B cell (primary cell): ENCODE measurements at regions of chr14 and their contacts with region 1.

Region 1: GRCh38 chr14:75002392-75003249 is at the start of gene EIF2B2:
- DNase-seq: peak; percentile 99
- ATAC-seq: peak; percentile 97
- H3K4me3 ChIP-seq: peak within 1 kb of the TSS; percentile 62 to 92 (median 73)
- H3K4me3 Mint-ChIP-seq: peak within 1 kb of the TSS; percentile 98
- H3K27ac ChIP-seq: peak within 1 kb of the TSS; percentile 88 to 95
- H3K27ac Mint-ChIP-seq: peak within 1 kb of the TSS; percentile 88
- H3K4me1 ChIP-seq: peaks cover 17 to 19% of the 10 kb centered on the region in 2 donors
- H3K4me1 Mint-ChIP-seq: peaks cover 29% of the 10 kb centered on the region
- H3K27me3 ChIP-seq: no peaks in the 10 kb centered on the region
- H3K27me3 Mint-ChIP-seq: no peaks in the 10 kb centered on the region
- CTCF ChIP-seq: peak; percentile 23
- total RNA-seq, gene EIF2B2: 25.5 and 31.1 TPM in 2 replicates

Region 2: GRCh38 chr14:74302634-74303577 is 699.7 kb before region 1 on chr14 and contains the start of gene ABCD4:
- CTCF ChIA-PET with region 1: no interaction called
- POLR2A ChIA-PET with region 1: no interaction called
- intact Hi-C with region 1: loop called (anchors 2 kb)
- DNase-seq: peak; percentile 90
- ATAC-seq: peak; percentile 98
- H3K4me3 ChIP-seq: peak within 1 kb of the TSS; percentile 69 to 96 (median 86)
- H3K4me3 Mint-ChIP-seq: peak within 1 kb of the TSS; percentile 95
- H3K27ac ChIP-seq: peak within 1 kb of the TSS; percentile 69 to 81
- H3K27ac Mint-ChIP-seq: peak within 1 kb of the TSS; percentile 88
- H3K4me1 ChIP-seq: peaks cover 11 to 14% of the 10 kb centered on the region in 2 donors
- H3K4me1 Mint-ChIP-seq: peaks cover 23% of the 10 kb centered on the region
- H3K27me3 ChIP-seq: no peaks in the 10 kb centered on the region
- H3K27me3 Mint-ChIP-seq: no peaks in the 10 kb centered on the region
- CTCF ChIP-seq: peak; percentile 59
- total RNA-seq, gene ABCD4: 119 and 125 TPM in 2 replicates

Region 3: GRCh38 chr14:74860906-74861733 is 141.5 kb before region 1 on chr14:
- CTCF ChIA-PET with region 1: interaction called, 12 read pairs
- POLR2A ChIA-PET with region 1: no interaction called
- intact Hi-C with region 1: no loop called
- DNase-seq: peak; percentile 88
- ATAC-seq: peak; percentile 81
- H3K4me3 ChIP-seq: no peak overlapping the region
- H3K4me3 Mint-ChIP-seq: no peak overlapping the region
- H3K27ac ChIP-seq: no peak overlapping the region
- H3K27ac Mint-ChIP-seq: no peak overlapping the region
- H3K4me1 ChIP-seq: peaks cover 0 to 19% of the 10 kb centered on the region in 2 donors
- H3K4me1 Mint-ChIP-seq: peaks cover 9% of the 10 kb centered on the region
- H3K27me3 ChIP-seq: no peaks in the 10 kb centered on the region
- H3K27me3 Mint-ChIP-seq: no peaks in the 10 kb centered on the region
- CTCF ChIP-seq: peak; percentile 87

Region 4: GRCh38 chr14:74922739-74923401 is 79.8 kb before region 1 on chr14 and contains the start of gene RPS6KL1:
- CTCF ChIA-PET with region 1: no interaction called
- POLR2A ChIA-PET with region 1: no interaction called
- intact Hi-C with region 1: loop called (anchors 1 kb)
- DNase-seq: peak; percentile 74
- ATAC-seq: peak; percentile 95
- H3K4me3 ChIP-seq: peak within 1 kb of the TSS in 4 of 5 experiments; percentile 45 to 62 (median 54)
- H3K4me3 Mint-ChIP-seq: peak within 1 kb of the TSS; percentile 79
- H3K27ac ChIP-seq: peak within 1 kb of the TSS in 1 of 2 donors; percentile 56
- H3K27ac Mint-ChIP-seq: peak within 1 kb of the TSS; percentile 26
- H3K4me1 ChIP-seq: peaks cover 4 to 13% of the 10 kb centered on the region in 2 donors
- H3K4me1 Mint-ChIP-seq: peaks cover 4% of the 10 kb centered on the region
- H3K27me3 ChIP-seq: no peaks in the 10 kb centered on the region
- H3K27me3 Mint-ChIP-seq: peaks cover 6% of the 10 kb centered on the region
- CTCF ChIP-seq: no peak
- total RNA-seq, gene RPS6KL1: 3.4 TPM in 2 replicates

Region 5: GRCh38 chr14:74973003-74973653 is 29.5 kb before region 1 on chr14:
- CTCF ChIA-PET with region 1: no interaction called
- POLR2A ChIA-PET with region 1: no interaction called
- intact Hi-C with region 1: loop called (anchors 2 kb)
- DNase-seq: no peak
- ATAC-seq: no peak
- H3K4me3 ChIP-seq: no peak overlapping the region
- H3K4me3 Mint-ChIP-seq: no peak overlapping the region
- H3K27ac ChIP-seq: no peak overlapping the region
- H3K27ac Mint-ChIP-seq: no peak overlapping the region
- H3K4me1 ChIP-seq: peaks cover 0 to 5% of the 10 kb centered on the region in 2 donors
- H3K4me1 Mint-ChIP-seq: no peaks in the 10 kb centered on the region
- H3K27me3 ChIP-seq: no peaks in the 10 kb centered on the region
- H3K27me3 Mint-ChIP-seq: no peaks in the 10 kb centered on the region
- CTCF ChIP-seq: no peak

Region 6: DNA sequence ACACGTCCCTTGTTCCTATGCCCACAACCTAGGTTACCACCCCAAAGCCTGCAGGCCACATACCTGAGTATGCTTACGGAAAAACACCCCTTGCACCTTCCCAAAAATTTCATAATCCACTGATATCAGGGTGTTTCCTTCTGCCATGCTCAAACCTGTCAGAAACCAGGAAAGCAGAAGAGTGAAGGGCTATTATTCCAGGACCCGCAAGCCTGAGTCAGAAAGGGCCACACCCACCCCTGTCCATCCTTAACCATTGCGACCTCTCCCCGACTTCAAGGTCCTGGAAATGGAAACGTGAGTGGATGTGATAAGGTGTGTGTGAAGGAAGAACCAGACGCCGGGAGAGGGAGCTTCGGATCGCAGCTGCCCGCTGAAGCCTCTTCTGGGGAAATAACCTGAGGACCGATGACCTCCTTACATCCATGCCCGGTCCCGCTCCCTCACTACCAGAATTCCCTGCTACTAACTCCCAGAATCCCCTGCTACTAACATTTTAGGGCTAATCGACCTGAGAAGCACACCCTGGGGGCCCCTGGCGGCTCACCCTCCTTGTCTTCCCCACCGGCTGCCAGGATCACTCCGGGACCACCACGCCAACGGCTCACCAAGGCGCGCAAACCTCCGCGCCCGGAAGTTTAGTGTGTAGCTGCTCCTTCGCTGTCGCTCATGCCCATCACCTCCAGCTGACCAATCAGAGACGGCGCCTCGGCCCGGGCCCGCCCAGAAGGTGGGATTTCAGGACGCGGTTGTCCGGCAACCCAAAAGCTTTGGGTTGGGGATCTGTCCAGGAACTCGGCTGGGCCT is 61.0 kb after region 1 on chr14 and contains the start of gene ACYP1:
- CTCF ChIA-PET with region 1: no interaction called
- POLR2A ChIA-PET with region 1: no interaction called
- intact Hi-C with region 1: loop called (anchors 1 kb)
- DNase-seq: peak; percentile 91
- ATAC-seq: peak; percentile 99
- H3K4me3 ChIP-seq: peak within 1 kb of the TSS; percentile 72 to 100 (median 96)
- H3K4me3 Mint-ChIP-seq: peak within 1 kb of the TSS; percentile 100
- H3K27ac ChIP-seq: peak within 1 kb of the TSS; percentile 65 to 73
- H3K27ac Mint-ChIP-seq: peak within 1 kb of the TSS; percentile 95
- H3K4me1 ChIP-seq: peaks cover 12 to 16% of the 10 kb centered on the region in 2 donors
- H3K4me1 Mint-ChIP-seq: peaks cover 20% of the 10 kb centered on the region
- H3K27me3 ChIP-seq: no peaks in the 10 kb centered on the region
- H3K27me3 Mint-ChIP-seq: no peaks in the 10 kb centered on the region
- CTCF ChIP-seq: no peak
- total RNA-seq, gene ACYP1: 34.1 and 46.7 TPM in 2 replicates

Region 7: DNA sequence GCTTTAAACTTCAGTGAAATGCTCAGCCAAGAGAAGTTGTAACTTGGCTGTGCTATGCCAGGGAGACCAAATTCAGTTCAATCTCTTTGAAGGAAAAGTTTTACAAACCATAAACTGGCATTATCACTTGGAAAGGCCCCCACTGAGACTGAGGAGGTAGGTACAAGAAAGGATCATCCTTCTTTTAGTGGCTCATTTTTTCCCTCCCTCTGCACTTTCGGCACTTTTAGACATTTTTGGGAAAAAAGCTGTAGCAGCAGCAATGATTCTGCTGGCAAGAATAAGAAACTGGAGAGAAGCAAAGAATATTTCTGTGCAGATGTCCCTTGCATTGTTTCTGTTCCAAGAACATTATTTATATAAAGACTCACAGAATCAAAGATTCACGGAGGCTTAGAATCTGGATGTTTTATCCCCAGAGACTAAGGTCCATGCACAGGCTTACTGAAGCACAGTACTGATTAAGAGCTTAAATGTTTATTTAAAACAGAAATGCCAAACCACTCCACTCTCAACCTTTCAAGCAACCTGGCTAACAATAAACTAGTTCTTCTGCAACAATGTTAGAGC is 79.1 kb after region 1 on chr14:
- CTCF ChIA-PET with region 1: no interaction called
- POLR2A ChIA-PET with region 1: no interaction called
- intact Hi-C with region 1: no loop called
- DNase-seq: no peak
- ATAC-seq: no peak
- H3K4me3 ChIP-seq: no peak overlapping the region
- H3K4me3 Mint-ChIP-seq: no peak overlapping the region
- H3K27ac ChIP-seq: no peak overlapping the region
- H3K27ac Mint-ChIP-seq: no peak overlapping the region
- H3K4me1 ChIP-seq: no peaks in the 10 kb centered on the region
- H3K4me1 Mint-ChIP-seq: no peaks in the 10 kb centered on the region
- H3K27me3 ChIP-seq: no peaks in the 10 kb centered on the region
- H3K27me3 Mint-ChIP-seq: no peaks in the 10 kb centered on the region
- CTCF ChIP-seq: no peak